ENCODE measurements at regions of chr11 and their contacts with region 1.

Region 1: DNA sequence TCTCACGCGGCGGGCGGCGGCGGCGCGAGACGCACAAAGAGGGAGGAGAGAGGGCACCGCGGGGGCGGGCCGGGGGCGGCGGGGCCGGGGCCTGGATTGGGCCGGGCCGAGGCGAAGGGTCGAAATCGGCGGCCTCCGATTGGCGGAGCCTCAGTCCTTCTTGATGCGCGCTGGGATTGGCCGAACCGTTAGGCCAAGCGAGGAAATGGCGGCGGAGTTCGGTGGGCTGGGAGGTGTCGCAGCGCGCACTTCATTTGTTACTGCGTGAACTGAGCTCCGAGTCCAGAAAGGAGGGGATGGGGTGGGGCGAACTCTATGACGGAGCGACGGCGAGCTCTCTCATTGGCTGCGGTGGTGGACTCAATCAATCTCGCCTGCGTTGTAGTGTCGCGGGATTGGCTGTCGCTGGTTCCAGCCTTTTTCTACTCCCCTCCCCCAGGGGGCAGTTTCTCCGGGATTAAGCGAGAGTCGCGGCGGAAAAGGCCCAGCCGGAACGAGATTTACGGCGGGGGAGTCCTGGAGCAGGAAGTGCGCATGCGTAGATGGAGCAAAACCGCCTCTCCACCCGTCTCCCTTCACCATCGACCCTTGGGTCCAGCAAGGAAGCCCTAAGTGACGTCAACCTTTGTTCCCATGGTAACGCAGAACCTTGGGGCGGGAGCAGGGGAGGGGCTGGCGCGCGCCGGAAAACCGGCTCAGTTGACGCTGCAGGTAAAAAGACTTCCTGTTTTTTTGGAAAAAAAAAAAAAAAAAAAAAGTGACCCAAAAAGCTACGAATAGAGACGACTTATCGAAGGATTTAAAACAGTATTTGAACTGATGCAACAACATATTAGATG is at the start of gene SF1:
- DNase-seq: peak; percentile 96 to 100 (median 98)
- ATAC-seq: peak; percentile 81
- H3K4me3 ChIP-seq: peak within 1 kb of the TSS; percentile 74
- H3K4me3 Mint-ChIP-seq: peak within 1 kb of the TSS; percentile 95
- H3K27ac ChIP-seq: peak within 1 kb of the TSS; percentile 94 to 98
- H3K27ac Mint-ChIP-seq: peak within 1 kb of the TSS; percentile 99
- H3K4me1 ChIP-seq: peaks cover 52% of the 10 kb centered on the region
- H3K4me1 Mint-ChIP-seq: peaks cover 70% of the 10 kb centered on the region
- H3K27me3 ChIP-seq: no peaks in the 10 kb centered on the region
- H3K27me3 Mint-ChIP-seq: no peaks in the 10 kb centered on the region
- CTCF ChIP-seq: peak; percentile 14
- total RNA-seq, gene SF1: 1,632 to 1,657 TPM

Region 2: GRCh38 chr11:64750361-64751054 is 28.2 kb before region 1 on chr11:
- CTCF ChIA-PET with region 1: interaction called, 3 read pairs
- POLR2A ChIA-PET with region 1: interaction called, 596 read pairs
- intact Hi-C with region 1: no loop called
- DNase-seq: peak in 3 of 14 experiments; percentile 47 to 53 (median 52)
- ATAC-seq: no peak
- H3K4me3 ChIP-seq: no peak overlapping the region
- H3K4me3 Mint-ChIP-seq: peak overlapping the region; percentile 47
- H3K27ac ChIP-seq: no peak overlapping the region
- H3K27ac Mint-ChIP-seq: peak overlapping the region; percentile 45
- H3K4me1 ChIP-seq: peaks cover 41% of the 10 kb centered on the region
- H3K4me1 Mint-ChIP-seq: peaks cover 33% of the 10 kb centered on the region
- H3K27me3 ChIP-seq: no peaks in the 10 kb centered on the region
- H3K27me3 Mint-ChIP-seq: no peaks in the 10 kb centered on the region
- CTCF ChIP-seq: peak; percentile 40

Region 3: GRCh38 chr11:64793271-64794172 is 14.8 kb after region 1 on chr11:
- CTCF ChIA-PET with region 1: interaction called, 3 read pairs
- POLR2A ChIA-PET with region 1: interaction called, 28 read pairs
- intact Hi-C with region 1: no loop called
- DNase-seq: no peak
- ATAC-seq: no peak
- H3K4me3 ChIP-seq: no peak overlapping the region
- H3K4me3 Mint-ChIP-seq: no peak overlapping the region
- H3K27ac ChIP-seq: peak overlapping the region in 1 of 2 donors; percentile 40
- H3K27ac Mint-ChIP-seq: peak overlapping the region; percentile 65
- H3K4me1 ChIP-seq: peaks cover 22% of the 10 kb centered on the region
- H3K4me1 Mint-ChIP-seq: peaks cover 24% of the 10 kb centered on the region
- H3K27me3 ChIP-seq: no peaks in the 10 kb centered on the region
- H3K27me3 Mint-ChIP-seq: no peaks in the 10 kb centered on the region
- CTCF ChIP-seq: no peak

Region 4: DNA sequence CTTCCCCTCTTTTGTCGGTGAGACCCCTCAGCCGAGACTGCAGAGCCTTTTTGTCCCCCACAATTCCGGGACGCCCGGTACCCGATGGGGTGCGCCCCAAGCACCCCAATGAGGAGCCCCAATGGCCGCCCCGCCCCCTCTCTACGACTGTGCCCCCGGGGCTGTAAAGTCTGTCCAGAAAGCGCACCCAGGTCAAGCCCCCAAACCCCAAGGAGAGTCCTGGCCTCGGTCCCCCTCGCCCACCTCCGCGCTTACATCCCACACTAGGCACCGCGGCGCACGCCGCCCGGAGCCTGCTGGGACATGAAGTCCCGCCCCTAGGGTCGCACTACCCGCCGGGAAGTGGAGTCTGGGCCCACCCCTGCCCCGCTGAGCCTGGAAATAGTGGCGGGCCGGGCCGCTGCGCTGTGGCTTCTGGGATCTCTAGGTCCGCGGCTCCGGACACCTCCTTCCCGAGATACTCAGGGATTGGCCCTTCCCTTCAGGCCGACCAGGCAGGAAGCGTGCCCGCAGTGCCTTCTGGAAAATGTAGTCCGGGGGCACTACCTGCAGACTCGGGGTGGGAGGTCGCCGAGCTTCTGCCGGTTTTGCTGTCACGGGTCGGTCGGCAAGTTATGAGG is 31.7 kb after region 1 on chr11 and contains the start of gene MEN1:
- CTCF ChIA-PET with region 1: no interaction called
- POLR2A ChIA-PET with region 1: interaction called, 90 read pairs
- intact Hi-C with region 1: loop called in 1 of 2 experiments (anchors 2 kb)
- DNase-seq: peak; percentile 45 to 85 (median 69)
- ATAC-seq: peak; percentile 83
- H3K4me3 ChIP-seq: peak within 1 kb of the TSS; percentile 87
- H3K4me3 Mint-ChIP-seq: peak within 1 kb of the TSS; percentile 99
- H3K27ac ChIP-seq: peak within 1 kb of the TSS; percentile 83 to 88
- H3K27ac Mint-ChIP-seq: peak within 1 kb of the TSS; percentile 85
- H3K4me1 ChIP-seq: peaks cover 17% of the 10 kb centered on the region
- H3K4me1 Mint-ChIP-seq: peaks cover 32% of the 10 kb centered on the region
- H3K27me3 ChIP-seq: no peaks in the 10 kb centered on the region
- H3K27me3 Mint-ChIP-seq: no peaks in the 10 kb centered on the region
- CTCF ChIP-seq: no peak
- total RNA-seq, gene MEN1: 16.4 to 17.7 TPM

Region 5: DNA sequence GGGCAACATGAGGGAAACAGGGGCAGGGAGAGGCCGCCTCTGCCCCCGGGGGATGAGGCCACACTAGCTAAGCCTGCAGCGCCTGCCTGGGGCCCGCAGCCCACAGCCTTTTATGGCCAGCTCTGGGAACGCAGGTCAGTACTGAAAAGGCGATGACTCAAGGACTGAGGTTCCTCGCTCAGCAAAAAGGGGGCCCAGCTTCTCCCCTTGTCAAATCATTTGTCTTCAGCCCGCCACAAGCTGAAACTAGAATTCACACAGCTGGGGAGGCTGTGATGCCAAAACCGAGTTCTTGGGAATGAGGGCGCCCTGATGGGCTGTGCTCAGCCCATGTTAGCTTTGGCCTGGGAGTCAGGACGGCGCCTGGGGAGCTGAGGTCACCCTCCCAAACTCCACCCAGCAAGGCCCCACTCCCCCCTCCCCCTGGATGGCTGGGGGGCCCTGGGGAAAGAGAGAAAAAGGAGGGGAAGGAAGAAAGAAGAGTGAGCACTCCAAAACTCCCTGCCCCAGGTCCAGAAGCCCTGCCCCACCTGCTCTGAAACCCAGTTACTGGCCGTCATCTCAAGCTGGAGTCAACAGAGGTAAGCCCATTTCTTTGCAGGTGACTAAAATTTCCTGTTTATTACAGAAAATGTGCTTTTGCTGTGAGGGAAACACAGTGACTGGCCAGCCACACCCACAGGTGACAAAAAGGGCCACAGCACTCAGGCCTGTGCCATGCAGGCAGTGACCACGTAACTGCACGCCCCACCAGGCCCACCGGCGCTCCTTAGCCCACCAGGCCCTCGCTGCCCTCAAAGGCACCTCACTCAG is 86.0 kb after region 1 on chr11:
- CTCF ChIA-PET with region 1: interaction called, 4 read pairs
- POLR2A ChIA-PET with region 1: interaction called, 26 read pairs
- intact Hi-C with region 1: loop called in 1 of 2 experiments (anchors 10 kb)
- DNase-seq: peak in 4 of 14 experiments; percentile 43 to 66 (median 55)
- ATAC-seq: no peak
- H3K4me3 ChIP-seq: peak overlapping the region; percentile 47
- H3K4me3 Mint-ChIP-seq: peak overlapping the region; percentile 71
- H3K27ac ChIP-seq: peak overlapping the region; percentile 82 to 89
- H3K27ac Mint-ChIP-seq: peak overlapping the region; percentile 93
- H3K4me1 ChIP-seq: peaks cover 100% of the 10 kb centered on the region
- H3K4me1 Mint-ChIP-seq: peaks cover 92% of the 10 kb centered on the region
- H3K27me3 ChIP-seq: no peaks in the 10 kb centered on the region
- H3K27me3 Mint-ChIP-seq: no peaks in the 10 kb centered on the region
- CTCF ChIP-seq: no peak

Region 6: GRCh38 chr11:64924102-64924851 is 145.6 kb after region 1 on chr11 and contains the start of gene PPP2R5B:
- CTCF ChIA-PET with region 1: no interaction called
- POLR2A ChIA-PET with region 1: interaction called, 13 read pairs
- intact Hi-C with region 1: no loop called
- DNase-seq: peak; percentile 79 to 95 (median 90)
- ATAC-seq: peak; percentile 92
- H3K4me3 ChIP-seq: peak within 1 kb of the TSS; percentile 69
- H3K4me3 Mint-ChIP-seq: peak within 1 kb of the TSS; percentile 95
- H3K27ac ChIP-seq: peak within 1 kb of the TSS; percentile 73 to 89
- H3K27ac Mint-ChIP-seq: peak within 1 kb of the TSS; percentile 97
- H3K4me1 ChIP-seq: peaks cover 30% of the 10 kb centered on the region
- H3K4me1 Mint-ChIP-seq: peaks cover 13% of the 10 kb centered on the region
- H3K27me3 ChIP-seq: no peaks in the 10 kb centered on the region
- H3K27me3 Mint-ChIP-seq: no peaks in the 10 kb centered on the region
- CTCF ChIP-seq: no peak
- total RNA-seq, gene PPP2R5B: 16.8 to 18.3 TPM

Region 7: GRCh38 chr11:65134386-65135253 is 355.9 kb after region 1 on chr11 and contains the start of gene SYVN1:
- CTCF ChIA-PET with region 1: no interaction called
- POLR2A ChIA-PET with region 1: interaction called, 14 read pairs
- intact Hi-C with region 1: no loop called
- DNase-seq: peak; percentile 86 to 96 (median 90)
- ATAC-seq: peak; percentile 88
- H3K4me3 ChIP-seq: peak within 1 kb of the TSS; percentile 83
- H3K4me3 Mint-ChIP-seq: peak within 1 kb of the TSS; percentile 99
- H3K27ac ChIP-seq: peak within 1 kb of the TSS; percentile 96 to 99
- H3K27ac Mint-ChIP-seq: peak within 1 kb of the TSS; percentile 100
- H3K4me1 ChIP-seq: peaks cover 47% of the 10 kb centered on the region
- H3K4me1 Mint-ChIP-seq: peaks cover 45% of the 10 kb centered on the region
- H3K27me3 ChIP-seq: no peaks in the 10 kb centered on the region
- H3K27me3 Mint-ChIP-seq: no peaks in the 10 kb centered on the region
- CTCF ChIP-seq: no peak
- total RNA-seq, gene SYVN1: 89.1 to 96.8 TPM